Heart right ventricle (tissue), 16 donors: ENCODE measurements at regions of chr13 and their contacts with region 1.

Region 1: GRCh38 chr13:106619688-106620555 is 52.0 kb upstream of the ARGLU1 start:
- DNase-seq: peak in 1 of 2 donors; percentile 53
- ATAC-seq: peak; percentile 79 to 94 (median 90)
- H3K4me3 ChIP-seq: peak overlapping the region in 7 of 10 donors; percentile 12 to 45 (median 34)
- H3K27ac ChIP-seq: peak overlapping the region in 5 of 10 donors; percentile 33 to 71 (median 48)
- H3K4me1 ChIP-seq: peaks cover 0 to 33% (median 10%) of the 10 kb centered on the region in 9 donors
- H3K27me3 ChIP-seq: peaks cover 0 to 36% (median 0%) of the 10 kb centered on the region in 7 donors
- CTCF ChIP-seq: peak; percentile 71 to 86 (median 81)

Region 2: GRCh38 chr13:106548064-106548696 is 71.7 kb before region 1 on chr13:
- intact Hi-C with region 1: loop called in 1 of 10 experiments (anchors 2 kb)
- DNase-seq: no peak
- ATAC-seq: no peak
- H3K4me3 ChIP-seq: no peak overlapping the region
- H3K27ac ChIP-seq: no peak overlapping the region
- H3K4me1 ChIP-seq: peaks cover 0 to 52% (median 45%) of the 10 kb centered on the region in 9 donors
- H3K27me3 ChIP-seq: no peaks in the 10 kb centered on the region
- CTCF ChIP-seq: no peak

Region 3: GRCh38 chr13:106567474-106568298 is 52.2 kb before region 1 on chr13 and contains the start of gene ARGLU1:
- intact Hi-C with region 1: loop called in 1 of 10 experiments (anchors 5 kb)
- DNase-seq: peak; percentile 94 to 96
- ATAC-seq: peak; percentile 90 to 98 (median 96)
- H3K4me3 ChIP-seq: peak within 1 kb of the TSS; percentile 66 to 96 (median 87)
- H3K27ac ChIP-seq: peak within 1 kb of the TSS; percentile 92 to 99 (median 97)
- H3K4me1 ChIP-seq: peaks cover 15 to 54% (median 44%) of the 10 kb centered on the region in 9 donors
- H3K27me3 ChIP-seq: no peaks in the 10 kb centered on the region
- CTCF ChIP-seq: no peak
- total RNA-seq, gene ARGLU1: 19.1 to 42.2 (median 29.6) TPM

Region 4: GRCh38 chr13:106701771-106702341 is 81.9 kb after region 1 on chr13:
- intact Hi-C with region 1: loop called in 2 of 10 experiments (anchors 5 to 10 kb)
- DNase-seq: peak; percentile 17 to 67
- ATAC-seq: peak; percentile 77 to 93 (median 90)
- H3K4me3 ChIP-seq: peak overlapping the region in 2 of 10 donors; percentile 0 to 19
- H3K27ac ChIP-seq: peak overlapping the region; percentile 58 to 86 (median 74)
- H3K4me1 ChIP-seq: peaks cover 0 to 57% (median 10%) of the 10 kb centered on the region in 9 donors
- H3K27me3 ChIP-seq: no peaks in the 10 kb centered on the region
- CTCF ChIP-seq: no peak

Region 5: GRCh38 chr13:106709522-106709921 is 89.6 kb after region 1 on chr13:
- intact Hi-C with region 1: loop called in 2 of 10 experiments (anchors 5 to 10 kb)
- DNase-seq: peak in 1 of 2 donors; percentile 54
- ATAC-seq: peak; percentile 70 to 92 (median 88)
- H3K4me3 ChIP-seq: peak overlapping the region in 8 of 10 donors; percentile 19 to 50 (median 40)
- H3K27ac ChIP-seq: peak overlapping the region; percentile 65 to 90 (median 82)
- H3K4me1 ChIP-seq: peaks cover 0 to 67% (median 17%) of the 10 kb centered on the region in 9 donors
- H3K27me3 ChIP-seq: no peaks in the 10 kb centered on the region
- CTCF ChIP-seq: no peak

Region 6: DNA sequence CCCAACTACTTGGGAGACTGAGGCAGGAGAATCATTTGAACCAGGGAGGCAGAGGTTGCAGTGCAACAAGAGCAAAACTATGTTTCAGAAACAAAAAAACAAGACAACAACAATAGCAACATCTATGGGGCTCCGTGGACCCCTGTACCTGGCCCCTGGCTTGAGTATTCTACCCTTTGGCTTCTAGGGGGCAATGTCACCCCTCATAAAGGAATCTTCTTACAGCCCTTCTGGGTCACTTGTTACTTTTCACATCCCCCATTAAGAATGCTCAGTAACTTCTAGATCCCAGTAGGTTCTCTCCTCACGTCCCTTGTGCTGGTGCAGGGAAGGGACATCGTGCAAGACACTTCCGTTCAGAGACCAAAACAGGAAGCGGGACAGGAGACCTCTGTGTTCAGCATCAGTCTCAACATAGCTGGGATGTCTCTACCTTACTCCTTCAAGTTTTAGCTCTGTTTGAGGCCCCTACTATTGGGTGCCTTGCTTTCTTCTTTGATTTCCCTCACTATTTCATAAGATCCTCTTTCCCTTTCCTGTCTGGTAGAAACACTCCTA is 166.2 kb after region 1 on chr13:
- intact Hi-C with region 1: no loop called
- DNase-seq: no peak
- ATAC-seq: no peak
- H3K4me3 ChIP-seq: no peak overlapping the region
- H3K27ac ChIP-seq: no peak overlapping the region
- H3K4me1 ChIP-seq: no peaks in the 10 kb centered on the region
- H3K27me3 ChIP-seq: no peaks in the 10 kb centered on the region
- CTCF ChIP-seq: no peak

Region 7: GRCh38 chr13:107124129-107124718 is 504.3 kb after region 1 on chr13:
- intact Hi-C with region 1: loop called in 1 of 10 experiments (anchors 5 kb)
- DNase-seq: no peak
- ATAC-seq: no peak
- H3K4me3 ChIP-seq: no peak overlapping the region
- H3K27ac ChIP-seq: no peak overlapping the region
- H3K4me1 ChIP-seq: peaks cover 0 to 6% (median 0%) of the 10 kb centered on the region in 9 donors
- H3K27me3 ChIP-seq: no peaks in the 10 kb centered on the region
- CTCF ChIP-seq: peak; percentile 54 to 88 (median 66)